Activated CD8-positive, alpha-beta T cell treated with anti-CD3 and anti-CD28 coated beads for 36 hours (primary cell): ENCODE measurements at regions of chr11 and their contacts with region 1.

Region 1: DNA sequence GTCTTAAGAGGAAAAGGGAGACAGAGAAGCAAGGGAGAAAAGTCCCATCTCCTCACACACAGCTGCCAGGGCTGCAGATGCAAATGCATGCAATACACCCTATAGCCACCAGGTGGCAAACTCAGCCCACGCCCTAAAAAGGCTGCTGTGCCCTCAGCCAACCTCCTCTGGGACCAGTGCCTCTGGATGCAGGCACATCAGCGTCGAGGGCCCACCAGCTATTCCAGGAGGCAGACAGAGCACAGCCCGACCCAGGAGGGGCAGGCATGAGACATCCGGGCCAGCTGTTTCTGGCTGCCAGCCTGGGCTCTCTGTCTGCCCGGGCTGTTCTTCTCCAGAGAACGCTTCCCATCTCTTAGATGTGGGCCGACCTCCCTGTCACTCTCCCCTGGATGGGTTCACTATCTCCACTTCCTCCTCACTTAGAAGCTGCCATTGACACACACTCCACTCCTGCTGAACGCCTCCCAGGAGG is 39.7 kb downstream of the TPBGL start:
- DNase-seq: peak; percentile 82
- ATAC-seq: peak; percentile 82
- H3K4me3 Mint-ChIP-seq: no peak overlapping the region
- H3K27ac Mint-ChIP-seq: no peak overlapping the region
- H3K4me1 Mint-ChIP-seq: peaks cover 32% of the 10 kb centered on the region
- H3K27me3 Mint-ChIP-seq: no peaks in the 10 kb centered on the region
- CTCF ChIP-seq: peak; percentile 98

Region 2: DNA sequence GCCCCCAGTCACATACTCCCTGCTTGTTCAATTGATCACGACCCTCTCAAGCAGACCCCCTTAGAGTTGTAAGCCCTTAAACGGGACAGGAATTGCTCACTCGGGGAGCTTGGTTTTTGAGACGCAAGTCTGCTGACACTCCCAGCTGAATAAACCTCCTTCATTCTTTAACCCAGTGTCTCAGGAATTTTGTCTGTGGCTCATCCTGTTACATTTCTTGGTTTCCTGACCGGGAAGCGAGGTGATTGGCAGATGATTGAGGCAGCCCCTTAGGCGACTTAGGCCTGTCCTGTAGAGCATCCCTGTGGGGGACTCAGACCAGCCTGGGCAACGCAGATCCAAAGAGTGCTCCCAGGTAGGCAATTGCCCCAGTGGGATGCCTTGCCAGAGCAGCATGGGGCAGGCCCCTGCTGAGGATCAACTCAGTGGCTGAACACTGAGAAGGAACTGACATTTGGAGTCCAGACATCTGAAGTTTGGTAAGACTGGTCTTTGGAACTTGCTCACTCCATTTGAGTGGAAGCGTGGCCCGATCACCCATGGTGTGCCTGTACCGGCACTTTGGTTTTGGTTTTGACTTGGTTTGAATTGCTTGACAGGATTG is 240.0 kb before region 1 on chr11:
- CTCF ChIA-PET with region 1: no interaction called
- POLR2A ChIA-PET with region 1: no interaction called
- intact Hi-C with region 1: no loop called
- DNase-seq: no peak
- ATAC-seq: no peak
- H3K4me3 Mint-ChIP-seq: no peak overlapping the region
- H3K27ac Mint-ChIP-seq: no peak overlapping the region
- H3K4me1 Mint-ChIP-seq: peaks cover 2% of the 10 kb centered on the region
- H3K27me3 Mint-ChIP-seq: peaks cover 5% of the 10 kb centered on the region
- CTCF ChIP-seq: no peak

Region 3: DNA sequence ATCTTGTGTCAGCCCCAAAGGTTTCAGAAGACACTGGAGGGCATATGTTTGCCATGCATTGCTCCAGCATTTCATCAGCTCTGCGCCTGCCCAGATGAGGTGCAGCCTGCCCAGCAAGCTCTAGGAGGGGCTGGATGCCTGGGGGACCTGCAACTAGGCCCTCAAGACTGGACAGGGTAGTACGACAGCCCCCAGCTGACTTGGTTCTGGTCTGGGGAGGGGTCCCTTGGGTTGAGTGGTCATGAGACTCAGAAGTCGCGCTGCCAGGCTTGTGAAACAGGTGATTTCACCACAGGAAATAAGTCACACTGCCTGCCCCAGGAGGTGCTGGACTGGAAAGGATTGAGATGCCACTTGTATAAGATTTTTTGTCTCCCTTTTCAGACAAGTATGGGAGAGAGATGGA is 16.3 kb before region 1 on chr11:
- CTCF ChIA-PET with region 1: interaction called, 45 read pairs
- POLR2A ChIA-PET with region 1: no interaction called
- intact Hi-C with region 1: no loop called
- DNase-seq: peak; percentile 52
- ATAC-seq: peak; percentile 61
- H3K4me3 Mint-ChIP-seq: no peak overlapping the region
- H3K27ac Mint-ChIP-seq: peak overlapping the region; percentile 23
- H3K4me1 Mint-ChIP-seq: peaks cover 41% of the 10 kb centered on the region
- H3K27me3 Mint-ChIP-seq: no peaks in the 10 kb centered on the region
- CTCF ChIP-seq: no peak

Region 4: DNA sequence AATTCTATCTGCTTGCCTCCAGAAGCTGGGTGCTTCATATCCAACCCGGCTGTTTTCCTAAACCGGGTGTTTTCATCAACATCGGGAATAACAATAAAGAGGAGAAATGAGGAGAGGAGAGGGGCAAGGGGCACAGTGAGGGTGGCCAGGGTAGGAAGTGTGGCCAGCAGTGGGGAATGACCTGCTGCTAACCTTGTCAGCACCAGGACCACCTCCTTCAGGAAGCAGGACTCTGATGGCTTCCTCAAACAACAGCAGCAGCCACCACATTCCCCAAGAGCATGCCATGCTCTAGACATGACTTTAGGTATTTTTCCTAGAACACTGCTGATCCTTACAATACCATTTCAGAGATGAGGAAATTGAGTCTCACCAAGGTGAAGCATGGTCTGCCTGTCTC is 12.7 kb after region 1 on chr11:
- CTCF ChIA-PET with region 1: interaction called, 15 read pairs
- POLR2A ChIA-PET with region 1: no interaction called
- intact Hi-C with region 1: no loop called
- DNase-seq: no peak
- ATAC-seq: no peak
- H3K4me3 Mint-ChIP-seq: no peak overlapping the region
- H3K27ac Mint-ChIP-seq: no peak overlapping the region
- H3K4me1 Mint-ChIP-seq: peaks cover 11% of the 10 kb centered on the region
- H3K27me3 Mint-ChIP-seq: no peaks in the 10 kb centered on the region
- CTCF ChIP-seq: no peak

Region 5: GRCh38 chr11:75328426-75329277 is 48.4 kb after region 1 on chr11:
- CTCF ChIA-PET with region 1: interaction called, 10 read pairs
- POLR2A ChIA-PET with region 1: interaction called, 4 read pairs
- intact Hi-C with region 1: loop called (anchors 5 kb)
- DNase-seq: peak; percentile 81
- ATAC-seq: peak; percentile 67
- H3K4me3 Mint-ChIP-seq: no peak overlapping the region
- H3K27ac Mint-ChIP-seq: peak overlapping the region; percentile 18
- H3K4me1 Mint-ChIP-seq: peaks cover 65% of the 10 kb centered on the region
- H3K27me3 Mint-ChIP-seq: no peaks in the 10 kb centered on the region
- CTCF ChIP-seq: no peak

Region 6: GRCh38 chr11:75342903-75343870 is 62.9 kb after region 1 on chr11:
- CTCF ChIA-PET with region 1: interaction called, 11 read pairs
- POLR2A ChIA-PET with region 1: interaction called, 4 read pairs
- intact Hi-C with region 1: no loop called
- DNase-seq: no peak
- ATAC-seq: no peak
- H3K4me3 Mint-ChIP-seq: no peak overlapping the region
- H3K27ac Mint-ChIP-seq: peak overlapping the region; percentile 6
- H3K4me1 Mint-ChIP-seq: peaks cover 97% of the 10 kb centered on the region
- H3K27me3 Mint-ChIP-seq: no peaks in the 10 kb centered on the region
- CTCF ChIP-seq: no peak

Region 7: DNA sequence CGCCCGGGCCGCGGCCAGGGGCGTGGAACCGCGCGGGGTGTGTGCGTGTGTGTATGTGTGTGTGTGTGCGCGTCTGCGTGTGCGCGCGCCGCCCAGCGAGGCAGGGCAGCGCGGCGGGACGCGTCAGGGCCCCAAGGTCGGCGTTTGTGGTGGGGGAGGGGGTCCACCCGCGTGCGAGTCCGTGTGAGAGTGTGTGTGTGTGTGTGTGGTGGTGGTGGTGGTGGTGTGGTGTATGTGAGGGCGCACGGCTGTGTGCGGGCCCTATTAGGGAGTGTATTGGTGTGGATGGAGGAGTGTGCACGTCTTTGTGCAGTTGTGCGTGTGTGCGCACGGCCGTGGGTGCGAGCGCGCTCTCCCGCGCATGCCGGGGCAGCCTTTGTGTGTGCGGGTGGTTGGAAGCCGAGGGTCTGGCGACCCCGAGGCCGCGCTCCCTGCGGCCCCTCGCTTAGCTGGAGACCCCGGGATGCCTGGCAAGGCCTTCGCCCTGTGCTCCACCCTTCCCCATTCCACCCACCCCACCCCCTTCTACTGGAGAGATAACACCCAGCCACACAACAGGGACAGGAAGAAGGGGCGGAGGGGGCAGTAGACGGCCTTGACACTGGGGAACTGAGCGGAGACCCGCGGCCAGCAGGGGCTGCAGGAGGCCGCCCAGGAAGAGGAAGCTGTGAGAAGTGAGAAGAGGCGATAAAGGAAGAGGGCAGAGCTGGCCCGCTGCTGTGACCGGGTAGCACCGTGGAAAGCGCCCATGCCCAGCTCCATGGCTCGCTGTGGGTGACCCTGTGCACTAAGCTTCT is 71.7 kb after region 1 on chr11:
- CTCF ChIA-PET with region 1: interaction called, 13 read pairs
- POLR2A ChIA-PET with region 1: interaction called, 5 read pairs
- intact Hi-C with region 1: no loop called
- DNase-seq: peak; percentile 64
- ATAC-seq: peak; percentile 55
- H3K4me3 Mint-ChIP-seq: peak overlapping the region; percentile 79
- H3K27ac Mint-ChIP-seq: peak overlapping the region; percentile 86
- H3K4me1 Mint-ChIP-seq: peaks cover 49% of the 10 kb centered on the region
- H3K27me3 Mint-ChIP-seq: no peaks in the 10 kb centered on the region
- CTCF ChIP-seq: no peak

Region 8: GRCh38 chr11:75532200-75533048 is 252.2 kb after region 1 on chr11:
- CTCF ChIA-PET with region 1: interaction called, 12 read pairs
- POLR2A ChIA-PET with region 1: no interaction called
- intact Hi-C with region 1: loop called (anchors 10 kb)
- DNase-seq: peak; percentile 89
- ATAC-seq: peak; percentile 81
- H3K4me3 Mint-ChIP-seq: no peak overlapping the region
- H3K27ac Mint-ChIP-seq: no peak overlapping the region
- H3K4me1 Mint-ChIP-seq: peaks cover 31% of the 10 kb centered on the region
- H3K27me3 Mint-ChIP-seq: no peaks in the 10 kb centered on the region
- CTCF ChIP-seq: peak; percentile 95

Region 9: GRCh38 chr11:75625991-75626888 is 346.0 kb after region 1 on chr11:
- CTCF ChIA-PET with region 1: no interaction called
- POLR2A ChIA-PET with region 1: no interaction called
- intact Hi-C with region 1: no loop called
- DNase-seq: no peak
- ATAC-seq: no peak
- H3K4me3 Mint-ChIP-seq: no peak overlapping the region
- H3K27ac Mint-ChIP-seq: no peak overlapping the region
- H3K4me1 Mint-ChIP-seq: no peaks in the 10 kb centered on the region
- H3K27me3 Mint-ChIP-seq: peaks cover 10% of the 10 kb centered on the region
- CTCF ChIP-seq: no peak